H1 (cell line): ENCODE measurements at regions of chr7 and their contacts with region 1.

Region 1: GRCh38 chr7:39746103-39746819 is 122.9 kb downstream of the RALA start:
- DNase-seq: peak; percentile 68 to 81
- H3K4me3 ChIP-seq: no peak overlapping the region
- H3K27ac ChIP-seq: no peak overlapping the region
- H3K4me1 ChIP-seq: peaks cover 0 to 4% (median 0%) of the 10 kb centered on the region in 4 experiments; a peak in 2 of 7 replicates
- H3K27me3 ChIP-seq: no peaks in the 10 kb centered on the region
- CTCF ChIP-seq: peak; percentile 73 to 87 (median 82)
- EP300 ChIP-seq: no peak
- POLR2A ChIP-seq: no peak
- RAD21 ChIP-seq: peak; percentile 84 to 88

Region 2: DNA sequence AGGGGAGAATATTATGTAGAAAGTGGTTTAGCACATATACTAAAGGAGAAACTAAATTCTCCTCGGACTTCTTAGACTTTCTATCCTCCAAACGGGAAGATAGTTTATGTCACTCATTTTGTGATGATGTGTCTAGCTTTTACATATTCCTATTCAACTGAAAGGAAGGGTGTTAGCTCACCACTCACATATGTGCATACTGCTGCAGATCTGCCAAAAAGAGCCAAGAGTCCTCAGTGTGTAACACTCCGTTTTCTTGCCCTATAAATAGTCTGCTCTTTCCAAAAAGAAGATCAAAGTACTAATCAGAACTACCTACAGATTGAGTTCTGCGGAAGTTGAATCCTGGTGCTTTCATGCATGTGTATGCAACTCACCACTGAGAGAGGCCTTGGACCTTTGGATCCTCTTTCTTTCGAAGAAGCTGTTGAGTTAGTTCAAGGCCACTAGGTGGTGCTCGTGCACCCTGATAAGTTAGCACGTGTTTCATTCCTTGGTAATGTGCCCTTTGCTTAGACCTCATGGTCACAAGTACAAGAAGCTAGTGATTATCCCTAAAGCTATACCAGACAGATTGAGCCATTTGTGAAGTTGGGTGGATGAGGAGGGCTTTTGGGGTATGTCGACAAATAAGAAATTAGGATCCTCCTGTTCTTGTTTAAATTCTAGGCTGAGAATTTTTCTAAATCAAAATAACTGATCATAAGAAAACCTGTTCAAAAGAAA is 165.9 kb before region 1 on chr7:
- CTCF ChIA-PET with region 1: interaction called, 406 read pairs
- POLR2A ChIA-PET with region 1: interaction called, 6 read pairs
- DNase-seq: peak; percentile 67 to 74
- H3K4me3 ChIP-seq: no peak overlapping the region
- H3K27ac ChIP-seq: no peak overlapping the region
- H3K4me1 ChIP-seq: peaks cover 0 to 4% (median 2%) of the 10 kb centered on the region in 4 experiments; a peak in 4 of 7 replicates
- H3K27me3 ChIP-seq: no peaks in the 10 kb centered on the region
- CTCF ChIP-seq: peak; percentile 6 to 92 (median 91)
- EP300 ChIP-seq: no peak
- POLR2A ChIP-seq: no peak
- RAD21 ChIP-seq: peak; percentile 98 to 99

Region 3: DNA sequence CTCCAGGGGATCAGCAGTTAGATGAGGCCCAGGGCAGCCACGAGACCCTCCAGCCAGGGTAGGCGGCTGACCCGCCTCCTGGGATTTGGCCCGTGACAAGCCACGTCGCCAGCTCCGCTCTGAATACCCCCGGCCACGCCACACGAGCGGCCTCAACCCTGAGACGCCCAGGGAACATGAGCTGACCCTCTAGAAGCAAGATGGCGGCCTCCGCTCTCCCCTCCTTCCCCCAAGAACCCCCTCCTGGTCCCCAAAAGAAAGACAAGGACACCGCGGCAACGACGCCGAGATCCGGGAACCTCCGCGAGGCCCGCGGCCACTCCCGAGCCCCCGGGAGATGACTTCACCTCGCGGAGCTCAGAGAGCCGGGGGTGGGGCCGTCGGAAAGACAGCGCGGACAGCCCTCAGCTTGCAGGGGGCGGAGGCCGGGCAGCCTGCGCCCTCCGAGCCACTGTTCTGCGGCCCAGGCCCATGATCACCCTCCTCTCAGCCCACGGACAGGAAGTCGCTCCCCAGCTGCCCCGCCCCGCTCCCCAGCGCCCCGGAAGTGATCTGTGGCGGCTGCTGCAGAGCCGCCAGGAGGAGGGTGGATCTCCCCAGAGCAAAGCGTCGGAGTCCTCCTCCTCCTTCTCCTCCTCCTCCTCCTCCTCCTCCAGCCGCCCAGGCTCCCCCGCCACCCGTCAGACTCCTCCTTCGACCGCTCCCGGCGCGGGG is 123.1 kb before region 1 on chr7 and contains the start of gene RALA:
- CTCF ChIA-PET with region 1: interaction called, 145 read pairs
- POLR2A ChIA-PET with region 1: interaction called, 11 read pairs
- DNase-seq: peak; percentile 77 to 92
- H3K4me3 ChIP-seq: peak within 1 kb of the TSS; percentile 69 to 93 (median 78)
- H3K27ac ChIP-seq: peak within 1 kb of the TSS; percentile 98
- H3K4me1 ChIP-seq: peaks cover 2 to 8% (median 5%) of the 10 kb centered on the region in 4 experiments; a peak in 6 of 7 replicates
- H3K27me3 ChIP-seq: no peaks in the 10 kb centered on the region
- CTCF ChIP-seq: no peak
- EP300 ChIP-seq: no peak
- POLR2A ChIP-seq: peak; percentile 96 to 98
- RAD21 ChIP-seq: no peak
- total RNA-seq, gene RALA: 68.5 and 72.8 TPM in 2 replicates

Region 4: DNA sequence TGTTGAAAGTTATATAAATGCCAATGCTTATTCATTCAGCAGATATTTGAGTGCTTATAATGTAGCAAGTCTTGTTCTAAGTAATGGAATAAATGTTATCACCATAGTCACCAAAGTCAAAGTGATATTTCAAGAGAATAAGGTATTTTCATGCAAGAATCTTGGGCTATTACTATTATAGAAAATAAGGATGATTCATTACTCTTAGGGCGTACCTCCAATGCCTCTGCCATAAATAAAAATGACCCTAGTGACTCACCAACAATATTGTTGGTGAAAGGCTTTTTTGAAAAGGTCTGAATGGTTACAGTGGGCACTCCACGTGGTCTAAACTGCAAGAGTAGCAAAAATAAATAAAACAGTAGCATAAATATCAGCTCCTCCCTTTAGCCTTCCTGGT is 54.4 kb before region 1 on chr7:
- CTCF ChIA-PET with region 1: interaction called, 14 read pairs
- POLR2A ChIA-PET with region 1: no interaction called
- DNase-seq: no peak
- H3K4me3 ChIP-seq: no peak overlapping the region
- H3K27ac ChIP-seq: no peak overlapping the region
- H3K4me1 ChIP-seq: no peaks in the 10 kb centered on the region
- H3K27me3 ChIP-seq: no peaks in the 10 kb centered on the region
- CTCF ChIP-seq: no peak
- EP300 ChIP-seq: no peak
- POLR2A ChIP-seq: no peak
- RAD21 ChIP-seq: no peak

Region 5: GRCh38 chr7:39720574-39720973 is 25.7 kb before region 1 on chr7:
- CTCF ChIA-PET with region 1: interaction called, 140 read pairs
- POLR2A ChIA-PET with region 1: interaction called, 3 read pairs
- DNase-seq: no peak
- H3K4me3 ChIP-seq: no peak overlapping the region
- H3K27ac ChIP-seq: no peak overlapping the region
- H3K4me1 ChIP-seq: peaks cover 4 to 14% (median 5%) of the 10 kb centered on the region in 4 experiments; a peak in 4 of 7 replicates
- H3K27me3 ChIP-seq: no peaks in the 10 kb centered on the region
- CTCF ChIP-seq: no peak
- EP300 ChIP-seq: no peak
- POLR2A ChIP-seq: no peak
- RAD21 ChIP-seq: no peak

Region 6: DNA sequence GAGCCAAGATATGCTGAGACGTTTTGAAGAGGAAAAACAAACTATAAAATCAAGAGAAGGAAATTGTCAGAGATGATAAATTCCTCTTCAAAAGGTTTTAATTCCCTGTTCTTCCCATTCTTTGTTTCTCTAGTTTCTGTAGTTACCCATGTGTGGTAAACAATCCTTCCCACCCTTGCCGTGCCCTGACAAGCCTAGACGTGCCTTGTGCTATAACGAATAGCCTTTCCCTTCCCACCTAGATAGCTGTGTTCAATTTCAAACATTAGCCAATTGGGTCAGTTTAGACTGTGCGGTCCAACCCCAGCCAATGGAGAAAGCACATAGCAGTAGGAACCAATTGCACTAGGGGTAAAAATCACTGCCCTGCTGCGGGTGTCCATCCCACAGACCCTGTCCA is 15.2 kb after region 1 on chr7:
- CTCF ChIA-PET with region 1: interaction called, 53 read pairs
- POLR2A ChIA-PET with region 1: no interaction called
- DNase-seq: no peak
- H3K4me3 ChIP-seq: no peak overlapping the region
- H3K27ac ChIP-seq: no peak overlapping the region
- H3K4me1 ChIP-seq: peaks cover 0 to 7% (median 3%) of the 10 kb centered on the region in 4 experiments; a peak in 4 of 7 replicates
- H3K27me3 ChIP-seq: no peaks in the 10 kb centered on the region
- CTCF ChIP-seq: no peak
- EP300 ChIP-seq: no peak
- POLR2A ChIP-seq: no peak
- RAD21 ChIP-seq: no peak